MCF 10A (cell line): ENCODE measurements at regions of chr5 and their contacts with region 1.

Region 1: DNA sequence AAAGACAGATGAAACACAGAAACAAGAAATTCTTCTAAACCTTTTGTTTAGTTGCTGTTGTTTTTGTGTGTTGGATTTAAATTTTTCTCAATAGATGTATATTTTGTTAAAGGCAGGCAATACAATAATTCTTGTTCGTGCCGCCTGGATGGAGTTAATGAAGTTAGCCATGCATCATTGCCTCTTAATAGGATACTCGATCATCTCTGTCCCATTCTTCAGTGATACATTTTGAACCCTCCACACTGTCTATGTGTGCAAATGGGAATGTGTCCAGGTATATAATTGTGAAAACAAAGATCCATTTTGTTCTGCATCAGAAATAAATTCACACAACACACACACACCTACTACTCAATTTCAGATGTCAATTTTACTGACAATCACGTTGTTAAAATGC is 186.6 kb upstream of the ADAMTS16 start:
- DNase-seq: no peak
- H3K4me3 Mint-ChIP-seq: no peak overlapping the region
- H3K27ac Mint-ChIP-seq: no peak overlapping the region
- H3K4me1 Mint-ChIP-seq: no peaks in the 10 kb centered on the region
- H3K27me3 Mint-ChIP-seq: peaks cover 46% of the 10 kb centered on the region
- CTCF ChIP-seq: no peak

Region 2: DNA sequence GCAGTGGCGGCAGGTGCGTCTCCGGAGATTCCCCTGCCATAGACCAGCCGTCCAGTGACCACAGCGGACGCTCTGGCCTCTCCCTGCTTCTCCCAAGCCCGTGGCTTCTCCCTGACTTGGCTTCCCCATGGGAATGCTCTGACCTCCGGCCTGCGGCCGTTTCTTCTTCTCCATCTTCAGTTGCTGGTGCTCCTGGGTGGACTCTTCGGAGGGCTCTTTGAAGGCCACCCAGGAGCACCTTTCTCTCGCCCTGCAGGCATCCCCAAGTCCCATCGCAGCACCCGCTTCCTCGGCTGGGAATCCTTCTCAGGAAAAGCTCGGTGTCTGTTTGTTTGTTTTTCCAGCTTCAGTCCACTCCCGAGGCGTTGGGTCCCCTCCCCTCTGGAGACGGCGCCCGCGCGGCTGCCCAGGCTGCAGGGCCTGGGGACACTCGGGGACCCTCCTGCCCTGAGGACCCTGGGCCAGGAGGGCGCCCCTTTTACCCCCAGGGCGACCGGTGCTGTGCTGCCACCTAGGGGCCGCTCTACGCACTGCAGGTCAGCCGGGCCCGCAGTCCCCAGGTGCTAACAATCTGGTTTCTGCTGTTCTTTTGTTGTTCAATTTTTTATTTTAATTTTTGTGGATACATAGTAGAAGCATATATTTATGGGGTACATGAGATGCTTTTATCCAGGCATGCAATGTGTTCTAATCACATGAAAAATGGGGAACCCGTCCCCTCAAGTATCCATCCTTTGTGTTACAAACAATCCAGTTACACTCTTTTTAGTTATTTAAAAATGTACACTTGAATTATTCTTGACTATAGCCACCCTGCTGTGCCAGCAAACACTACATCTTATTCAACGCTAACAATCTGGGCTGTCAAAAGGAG is 11.4 kb before region 1 on chr5:
- CTCF ChIA-PET with region 1: interaction called, 10 read pairs
- POLR2A ChIA-PET with region 1: no interaction called
- intact Hi-C with region 1: no loop called
- DNase-seq: peak; percentile 14
- H3K4me3 Mint-ChIP-seq: no peak overlapping the region
- H3K27ac Mint-ChIP-seq: no peak overlapping the region
- H3K4me1 Mint-ChIP-seq: no peaks in the 10 kb centered on the region
- H3K27me3 Mint-ChIP-seq: no peaks in the 10 kb centered on the region
- CTCF ChIP-seq: peak; percentile 93